Activated B cell treated with CpG ODN at 0.5 μM for 24 hours (primary cell): ENCODE measurements at regions of chr9 and their contacts with region 1.

Region 1: GRCh38 chr9:14314929-14315645 is 1.1 kb upstream of the NFIB start:
- DNase-seq: no peak
- ATAC-seq: peak; percentile 51
- H3K4me3 Mint-ChIP-seq: peak overlapping the region; percentile 77
- H3K27ac Mint-ChIP-seq: no peak overlapping the region
- H3K4me1 Mint-ChIP-seq: peaks cover 19% of the 10 kb centered on the region
- H3K27me3 Mint-ChIP-seq: peaks cover 50% of the 10 kb centered on the region
- CTCF ChIP-seq: no peak

Region 2: DNA sequence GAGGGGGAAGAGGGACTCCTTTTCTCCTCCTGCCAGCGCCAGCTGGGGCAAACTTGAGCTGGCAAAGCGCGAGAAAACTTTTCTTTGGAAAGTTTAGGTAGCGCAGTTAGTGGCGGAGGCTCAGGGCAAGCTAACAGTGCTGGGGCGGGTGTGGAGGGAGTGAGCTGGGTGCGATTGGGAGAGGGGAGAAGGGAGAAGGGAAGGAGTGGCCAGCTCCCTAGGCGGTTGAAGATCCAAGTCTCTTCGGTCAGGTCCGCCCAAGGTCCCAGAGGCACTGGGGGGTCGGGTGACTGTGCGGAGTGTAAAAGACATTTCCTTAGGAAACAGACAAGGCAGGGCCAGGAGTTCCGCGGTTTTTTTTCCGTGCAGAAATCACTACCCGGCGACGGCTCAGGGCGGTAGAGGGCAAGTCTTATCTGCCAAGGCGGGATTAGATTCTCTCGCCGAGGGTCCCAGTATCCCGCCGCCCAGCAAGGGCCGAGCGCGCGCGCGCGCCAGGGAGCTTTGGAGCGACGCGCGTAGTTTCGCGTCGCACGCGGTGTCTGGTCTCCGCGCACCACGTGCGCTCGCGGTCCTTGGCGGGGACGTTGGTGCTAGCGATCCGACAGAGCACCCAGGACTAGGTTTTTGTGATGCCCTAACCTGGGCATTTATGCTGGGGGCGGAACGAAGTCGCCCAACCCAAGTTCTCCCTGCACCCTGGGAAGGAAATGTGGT is 32.5 kb after region 1 on chr9:
- CTCF ChIA-PET with region 1: no interaction called
- POLR2A ChIA-PET with region 1: no interaction called
- intact Hi-C with region 1: loop called (anchors 2 kb)
- DNase-seq: no peak
- ATAC-seq: no peak
- H3K4me3 Mint-ChIP-seq: no peak overlapping the region
- H3K27ac Mint-ChIP-seq: no peak overlapping the region
- H3K4me1 Mint-ChIP-seq: peaks cover 16% of the 10 kb centered on the region
- H3K27me3 Mint-ChIP-seq: peaks cover 54% of the 10 kb centered on the region
- CTCF ChIP-seq: no peak

Region 3: GRCh38 chr9:14627513-14627912 is 312.4 kb after region 1 on chr9:
- CTCF ChIA-PET with region 1: no interaction called
- POLR2A ChIA-PET with region 1: no interaction called
- intact Hi-C with region 1: no loop called
- DNase-seq: no peak
- ATAC-seq: no peak
- H3K4me3 Mint-ChIP-seq: no peak overlapping the region
- H3K27ac Mint-ChIP-seq: no peak overlapping the region
- H3K4me1 Mint-ChIP-seq: peaks cover 2% of the 10 kb centered on the region
- H3K27me3 Mint-ChIP-seq: no peaks in the 10 kb centered on the region
- CTCF ChIP-seq: no peak